Activated B cell treated with CpG ODN at 0.5 μM for 24 hours (primary cell): ENCODE measurements at regions of chr19 and their contacts with region 1.

Region 1: DNA sequence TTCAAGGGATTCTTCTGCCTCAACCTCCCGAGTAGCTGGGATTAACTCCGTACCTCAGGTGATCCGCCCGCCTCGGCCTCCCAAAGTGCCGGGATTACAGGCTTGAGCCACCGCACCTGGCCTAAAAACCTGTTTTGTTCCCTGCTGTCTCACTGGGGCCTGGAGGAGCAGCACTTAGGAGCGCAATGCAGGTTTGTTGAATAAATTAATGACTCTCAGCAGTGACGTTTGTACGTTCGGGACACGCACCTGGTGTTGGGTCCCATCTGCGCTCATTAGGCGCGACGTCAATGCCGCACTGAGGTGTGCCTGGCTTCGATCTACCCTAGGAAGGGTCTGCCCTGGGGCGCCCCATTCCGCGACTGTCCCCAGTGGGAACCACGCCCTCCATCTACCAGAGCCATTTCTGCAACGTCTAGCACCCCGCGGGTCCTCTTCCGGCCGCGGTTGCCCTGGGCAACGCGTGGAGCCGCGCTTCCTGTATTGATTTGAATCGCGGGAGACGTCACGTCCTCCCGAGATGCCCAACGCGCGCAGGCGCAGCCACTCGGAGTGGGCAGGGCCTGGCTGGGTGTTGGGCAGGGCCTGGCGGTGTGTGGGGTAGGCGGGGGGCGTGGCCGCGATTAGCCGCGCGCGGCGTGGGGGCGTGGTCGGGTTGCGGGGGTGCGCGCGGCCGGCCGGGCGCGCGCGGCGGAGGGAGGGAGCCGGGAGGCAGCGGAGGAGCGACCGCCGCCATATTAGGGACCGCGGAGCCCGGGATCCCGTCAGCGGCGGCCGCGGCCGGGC is at the start of gene FZR1:
- DNase-seq: peak; percentile 98
- ATAC-seq: peak; percentile 91
- H3K4me3 Mint-ChIP-seq: peak within 1 kb of the TSS; percentile 91
- H3K27ac Mint-ChIP-seq: peak within 1 kb of the TSS; percentile 96
- H3K4me1 Mint-ChIP-seq: peaks cover 47% of the 10 kb centered on the region
- H3K27me3 Mint-ChIP-seq: no peaks in the 10 kb centered on the region
- CTCF ChIP-seq: no peak
- total RNA-seq, gene FZR1: 53.5 and 66.0 TPM in 2 replicates

Region 2: GRCh38 chr19:3185482-3186376 is 320.1 kb before region 1 on chr19 and contains the start of gene NCLN:
- CTCF ChIA-PET with region 1: no interaction called
- POLR2A ChIA-PET with region 1: no interaction called
- intact Hi-C with region 1: loop called (anchors 1 kb)
- DNase-seq: peak; percentile 98
- ATAC-seq: peak; percentile 86
- H3K4me3 Mint-ChIP-seq: peak within 1 kb of the TSS; percentile 93
- H3K27ac Mint-ChIP-seq: peak within 1 kb of the TSS; percentile 95
- H3K4me1 Mint-ChIP-seq: peaks cover 74% of the 10 kb centered on the region
- H3K27me3 Mint-ChIP-seq: no peaks in the 10 kb centered on the region
- CTCF ChIP-seq: no peak
- total RNA-seq, gene NCLN: 61.1 and 64.8 TPM in 2 replicates

Region 3: DNA sequence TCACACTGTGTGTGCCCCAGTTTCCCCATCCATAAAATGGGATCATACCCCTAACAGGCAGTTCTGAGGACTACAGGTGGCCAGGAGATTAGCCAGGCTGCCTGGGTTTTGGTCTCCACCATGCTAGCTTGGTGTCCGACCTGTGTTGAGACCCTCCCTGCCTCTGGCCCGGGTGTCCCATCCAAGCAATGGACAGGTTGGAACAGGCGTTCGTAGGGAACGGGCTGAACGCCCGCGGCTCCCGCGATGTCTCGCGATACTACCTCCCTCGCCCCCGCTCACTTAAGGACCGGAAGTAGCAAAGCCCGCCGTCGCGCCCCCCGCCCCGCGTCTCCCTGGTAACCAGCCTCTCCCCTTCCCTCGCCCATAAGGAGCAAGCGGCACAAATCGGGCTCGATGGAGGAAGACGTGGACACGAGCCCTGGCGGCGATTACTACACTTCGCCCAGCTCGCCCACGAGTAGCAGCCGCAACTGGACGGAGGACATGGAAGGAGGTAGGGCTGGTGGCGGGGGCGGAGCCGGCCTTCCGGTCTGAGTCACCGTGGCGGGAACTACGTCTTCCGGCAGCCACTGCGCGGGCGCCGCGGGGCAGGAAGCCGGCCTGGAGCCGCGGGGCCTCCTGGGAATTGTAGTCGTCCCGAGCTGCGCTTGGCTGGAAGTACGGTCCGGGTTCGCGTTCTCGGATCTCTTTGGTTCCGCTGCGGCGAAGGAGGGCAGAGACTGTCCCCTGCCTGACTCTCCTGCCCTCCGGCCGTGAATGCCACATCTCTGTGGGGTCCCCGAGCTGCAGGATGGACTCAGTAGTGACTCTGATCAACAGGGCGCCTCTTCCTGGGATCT is 70.9 kb before region 1 on chr19:
- CTCF ChIA-PET with region 1: no interaction called
- POLR2A ChIA-PET with region 1: interaction called, 3 read pairs
- intact Hi-C with region 1: loop called (anchors 1 kb)
- DNase-seq: peak; percentile 98
- ATAC-seq: peak; percentile 92
- H3K4me3 Mint-ChIP-seq: peak overlapping the region; percentile 99
- H3K27ac Mint-ChIP-seq: peak overlapping the region; percentile 99
- H3K4me1 Mint-ChIP-seq: peaks cover 17% of the 10 kb centered on the region
- H3K27me3 Mint-ChIP-seq: no peaks in the 10 kb centered on the region
- CTCF ChIP-seq: no peak

Region 4: GRCh38 chr19:3557461-3558248 is 51.9 kb after region 1 on chr19 and contains the start of gene MFSD12:
- CTCF ChIA-PET with region 1: no interaction called
- POLR2A ChIA-PET with region 1: interaction called, 3 read pairs
- intact Hi-C with region 1: loop called (anchors 5 kb)
- DNase-seq: peak; percentile 94
- ATAC-seq: peak; percentile 86
- H3K4me3 Mint-ChIP-seq: peak within 1 kb of the TSS; percentile 89
- H3K27ac Mint-ChIP-seq: peak within 1 kb of the TSS; percentile 86
- H3K4me1 Mint-ChIP-seq: peaks cover 57% of the 10 kb centered on the region
- H3K27me3 Mint-ChIP-seq: no peaks in the 10 kb centered on the region
- CTCF ChIP-seq: no peak
- total RNA-seq, gene MFSD12: 59.2 and 76.9 TPM in 2 replicates

Region 5: DNA sequence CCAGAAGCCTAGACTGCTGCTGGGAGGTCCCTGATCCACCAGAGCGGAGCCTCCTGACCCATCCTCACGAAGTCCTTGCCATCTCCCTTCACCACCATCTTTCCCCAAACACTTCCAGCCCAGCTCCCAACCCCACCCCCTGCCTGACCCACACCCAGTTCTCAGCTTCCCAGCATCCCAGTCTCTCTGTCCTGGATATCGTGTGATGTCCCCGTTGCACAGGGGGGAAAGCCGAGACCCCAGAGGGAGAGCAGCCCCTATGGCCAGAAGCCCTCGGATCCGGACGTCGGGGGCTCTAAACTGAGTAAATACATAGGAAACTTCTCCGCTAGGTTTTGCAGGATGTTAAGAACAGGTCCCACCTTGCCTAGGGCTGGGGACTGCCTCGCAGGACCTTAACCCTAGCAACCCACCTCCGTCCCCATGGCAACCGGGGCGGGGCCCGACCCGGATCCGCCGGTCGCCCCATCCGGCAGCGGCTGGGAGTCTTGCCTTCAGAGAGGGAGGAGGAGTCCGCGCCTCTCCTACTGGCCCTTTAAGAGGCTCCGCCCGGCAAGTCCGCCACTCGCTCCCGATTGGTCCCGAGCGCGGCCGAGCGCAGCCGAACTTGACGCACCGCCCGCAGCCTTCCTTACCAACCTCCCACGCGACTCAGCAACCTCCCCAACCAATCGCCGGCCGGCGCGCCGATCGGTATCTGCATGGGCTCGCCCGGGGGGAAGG is 66.5 kb after region 1 on chr19:
- CTCF ChIA-PET with region 1: no interaction called
- POLR2A ChIA-PET with region 1: no interaction called
- intact Hi-C with region 1: loop called (anchors 1 kb)
- DNase-seq: peak; percentile 94
- ATAC-seq: peak; percentile 95
- H3K4me3 Mint-ChIP-seq: peak overlapping the region; percentile 81
- H3K27ac Mint-ChIP-seq: peak overlapping the region; percentile 53
- H3K4me1 Mint-ChIP-seq: peaks cover 19% of the 10 kb centered on the region
- H3K27me3 Mint-ChIP-seq: no peaks in the 10 kb centered on the region
- CTCF ChIP-seq: no peak

Region 6: GRCh38 chr19:3626473-3627350 is 120.9 kb after region 1 on chr19 and contains the start of gene CACTIN:
- CTCF ChIA-PET with region 1: no interaction called
- POLR2A ChIA-PET with region 1: interaction called, 6 read pairs
- intact Hi-C with region 1: loop called (anchors 2 kb)
- DNase-seq: peak; percentile 95
- ATAC-seq: peak; percentile 98
- H3K4me3 Mint-ChIP-seq: peak within 1 kb of the TSS; percentile 97
- H3K27ac Mint-ChIP-seq: peak within 1 kb of the TSS; percentile 99
- H3K4me1 Mint-ChIP-seq: peaks cover 30% of the 10 kb centered on the region
- H3K27me3 Mint-ChIP-seq: no peaks in the 10 kb centered on the region
- CTCF ChIP-seq: no peak
- total RNA-seq, gene CACTIN: 45.3 and 48.1 TPM in 2 replicates

Region 7: DNA sequence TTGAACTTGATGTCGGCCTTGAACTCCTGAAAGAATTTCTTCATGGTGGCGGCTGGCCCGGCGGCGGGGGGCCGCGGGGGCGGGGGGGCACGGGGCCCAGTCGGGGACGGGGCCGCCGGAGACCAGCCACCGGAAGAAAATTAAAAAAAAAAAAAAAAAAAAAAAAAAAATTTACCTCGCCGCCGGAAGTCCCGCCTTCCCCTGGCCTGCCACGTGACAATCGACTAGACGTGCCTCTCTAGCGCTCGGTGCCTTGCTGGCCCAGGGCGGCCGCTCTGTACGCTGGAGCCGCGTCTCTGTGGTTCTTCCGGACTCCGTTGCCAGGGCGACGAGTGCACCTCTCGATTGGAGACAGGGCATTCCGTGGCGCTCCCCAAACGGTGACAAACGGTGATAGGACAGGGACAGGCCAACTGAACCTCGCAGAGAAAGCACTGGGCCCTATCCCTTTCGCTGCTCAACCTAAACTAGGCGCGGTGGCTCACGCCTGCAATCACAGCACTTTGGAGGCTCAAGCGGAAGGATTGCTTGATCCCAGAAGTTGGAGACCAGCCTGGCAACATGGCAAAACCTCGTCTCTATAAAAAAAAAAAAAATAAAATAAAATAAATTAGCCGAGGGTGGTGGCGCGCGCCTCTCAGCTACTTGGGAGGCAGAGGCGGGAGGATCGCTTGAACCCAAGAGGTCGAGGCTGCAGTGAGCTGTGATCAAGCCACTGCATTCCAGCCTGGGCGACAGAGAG is 952.0 kb after region 1 on chr19 and contains the start of gene UBXN6:
- CTCF ChIA-PET with region 1: no interaction called
- POLR2A ChIA-PET with region 1: no interaction called
- intact Hi-C with region 1: loop called (anchors 10 kb)
- DNase-seq: peak; percentile 95
- ATAC-seq: peak; percentile 95
- H3K4me3 Mint-ChIP-seq: peak within 1 kb of the TSS; percentile 89
- H3K27ac Mint-ChIP-seq: peak within 1 kb of the TSS; percentile 86
- H3K4me1 Mint-ChIP-seq: peaks cover 20% of the 10 kb centered on the region
- H3K27me3 Mint-ChIP-seq: no peaks in the 10 kb centered on the region
- CTCF ChIP-seq: no peak
- total RNA-seq, gene UBXN6: 54.3 and 58.2 TPM in 2 replicates